ENCODE measurements at regions of chr12 and their contacts with region 1.

Region 1: DNA sequence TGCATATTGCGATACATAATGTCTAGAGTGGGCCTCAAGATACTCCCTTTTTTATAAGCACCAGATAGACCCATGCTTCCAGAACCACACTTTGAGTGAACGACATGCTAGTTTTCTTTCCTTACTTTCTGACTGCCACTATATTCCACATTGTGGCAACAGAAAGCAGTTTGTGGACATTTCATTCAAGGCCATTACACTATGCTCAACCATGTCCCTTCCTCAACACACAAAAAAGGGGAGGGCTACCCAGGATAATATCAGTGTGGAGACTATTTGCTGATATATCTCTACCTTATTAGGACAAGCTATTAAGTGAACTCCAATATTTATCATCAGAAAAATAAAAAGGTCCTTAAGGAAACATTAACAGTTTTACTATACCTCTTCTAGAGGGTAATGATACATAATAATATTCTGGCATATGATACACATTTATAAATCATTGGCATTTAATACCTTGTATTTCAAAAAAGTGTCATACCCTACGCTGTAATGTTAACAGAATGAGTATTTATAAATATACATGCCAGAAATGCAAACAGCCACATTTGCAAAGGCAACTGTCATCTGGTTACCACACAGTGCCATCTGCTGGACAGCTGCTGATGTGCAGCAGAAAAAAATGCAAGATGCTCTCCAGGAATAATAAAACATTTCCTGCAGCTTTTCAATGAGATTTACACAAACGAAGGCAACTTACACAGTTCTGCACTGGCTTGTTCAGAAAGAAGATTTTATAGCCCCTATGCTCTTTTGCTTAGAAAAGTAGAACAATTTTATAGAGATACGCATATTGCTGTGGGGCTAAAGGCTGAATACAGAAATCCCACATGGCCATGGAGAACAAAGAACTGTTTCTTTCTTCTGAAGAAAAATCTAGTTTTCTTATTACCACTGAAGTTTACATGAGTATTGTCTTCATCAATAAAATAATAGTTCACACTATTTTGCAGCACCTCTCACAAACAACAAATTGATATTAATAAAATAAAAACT is 182.2 kb upstream of the GRIP1 start:
- DNase-seq: peak; percentile 53
- H3K4me3 ChIP-seq: no peak overlapping the region
- H3K27ac ChIP-seq: no peak overlapping the region
- H3K4me1 ChIP-seq: no peaks in the 10 kb centered on the region
- H3K27me3 ChIP-seq: no peaks in the 10 kb centered on the region
- CTCF ChIP-seq: peak; percentile 64 to 87 (median 84)
- POLR2A ChIP-seq: no peak

Region 2: DNA sequence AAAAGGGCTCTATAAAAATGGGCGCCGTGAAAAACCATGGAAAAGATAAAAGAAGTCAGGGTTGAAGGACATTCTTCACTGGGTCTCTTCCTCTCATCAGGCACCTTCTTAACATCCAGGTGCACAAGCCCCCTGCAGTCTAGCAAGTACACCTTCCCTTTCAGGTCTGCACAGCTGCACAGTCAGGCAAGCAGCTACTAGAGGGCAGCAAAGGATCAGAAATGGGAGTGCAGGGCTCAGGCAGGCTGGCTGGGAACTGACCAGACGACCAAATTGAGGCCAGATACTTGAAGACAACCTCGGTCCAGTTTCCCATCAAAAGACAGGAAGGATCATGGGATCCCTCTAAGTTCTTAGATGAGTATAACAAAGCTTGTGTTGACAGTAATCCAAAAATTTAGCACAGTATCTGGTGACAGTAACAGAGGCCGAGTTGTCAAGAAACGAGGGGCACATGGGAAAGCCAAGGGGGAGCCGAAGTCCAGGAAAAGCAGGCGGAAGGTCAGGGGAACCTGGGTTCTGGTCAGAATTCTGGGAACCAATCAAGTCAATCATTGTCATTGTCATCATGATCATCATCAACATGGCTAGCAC is 172.1 kb before region 1 on chr12:
- intact Hi-C with region 1: loop called (anchors 2 kb)
- DNase-seq: peak; percentile 30
- H3K4me3 ChIP-seq: no peak overlapping the region
- H3K27ac ChIP-seq: no peak overlapping the region
- H3K4me1 ChIP-seq: no peaks in the 10 kb centered on the region
- H3K27me3 ChIP-seq: no peaks in the 10 kb centered on the region
- CTCF ChIP-seq: peak in 3 of 4 experiments; percentile 29 to 61 (median 57)
- POLR2A ChIP-seq: no peak

Region 3: DNA sequence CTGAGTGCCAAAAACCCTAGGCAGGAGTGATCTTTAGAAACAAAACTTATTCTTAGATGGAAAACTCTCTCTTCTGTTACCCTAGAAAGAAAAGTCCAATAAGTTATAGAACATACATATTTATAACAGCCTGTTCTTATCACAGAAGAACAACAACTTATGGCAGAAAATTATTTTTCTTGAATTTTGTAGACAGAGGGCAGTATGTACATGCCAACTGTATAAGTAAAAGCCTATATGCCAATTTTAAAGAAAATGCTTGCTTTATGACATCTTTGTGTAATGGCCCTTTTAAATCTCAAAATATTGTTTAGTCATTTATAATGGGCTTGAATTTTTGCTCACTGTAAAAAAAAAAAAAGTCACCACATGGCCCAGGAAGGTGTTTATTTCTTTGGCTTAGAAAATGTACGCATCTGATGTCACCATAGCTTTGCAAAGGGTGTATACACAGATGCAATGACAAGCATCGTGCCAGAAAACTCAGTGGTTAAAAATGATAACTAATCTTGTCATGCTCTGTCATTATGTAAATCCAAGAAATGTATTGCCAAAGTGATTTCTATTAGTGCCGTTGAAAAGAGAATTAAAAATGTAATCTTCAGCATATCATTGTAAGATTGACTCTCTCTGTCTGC is 143.9 kb before region 1 on chr12:
- intact Hi-C with region 1: loop called (anchors 10 kb)
- DNase-seq: no peak
- H3K4me3 ChIP-seq: no peak overlapping the region
- H3K27ac ChIP-seq: no peak overlapping the region
- H3K4me1 ChIP-seq: no peaks in the 10 kb centered on the region
- H3K27me3 ChIP-seq: no peaks in the 10 kb centered on the region
- CTCF ChIP-seq: no peak
- POLR2A ChIP-seq: no peak

Measured in prostate gland (tissue), 2 donors.